BJ (cell line): ENCODE measurements at regions of chr3 and their contacts with region 1.

Region 1: DNA sequence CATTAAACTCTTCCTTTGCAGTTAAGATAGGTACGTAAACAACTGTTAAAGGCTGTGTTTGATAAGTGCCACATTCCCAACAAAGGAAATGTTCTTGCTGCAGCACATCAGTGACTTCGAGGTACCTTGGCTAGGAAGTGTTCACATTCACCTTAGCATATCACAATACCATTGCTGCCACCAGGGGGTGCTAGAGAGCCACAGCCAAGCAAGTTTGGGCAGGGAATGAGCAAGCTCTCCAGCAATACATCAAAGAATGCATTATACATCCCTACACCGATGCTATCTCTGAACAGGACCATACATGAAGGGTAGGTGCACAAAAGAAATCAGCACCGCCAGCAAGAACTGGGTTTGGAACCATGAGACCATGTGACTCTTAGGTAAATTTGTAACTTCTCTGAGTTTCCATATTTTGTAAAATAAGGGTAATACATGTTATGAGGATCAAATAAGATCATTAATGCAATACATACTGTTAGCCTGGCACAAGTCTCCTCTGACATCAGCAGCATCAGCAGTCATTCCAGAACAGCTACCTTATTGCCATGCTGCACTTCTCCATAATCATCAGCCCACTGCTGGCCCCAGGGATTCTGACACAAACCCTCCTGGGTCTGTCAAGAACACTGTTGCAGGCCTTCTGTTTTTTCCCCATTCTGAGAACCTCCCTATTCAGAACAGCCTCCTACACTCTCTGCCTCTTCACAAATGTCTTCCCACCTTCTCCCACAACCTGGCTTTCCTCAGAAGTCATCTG is 37.6 kb downstream of the RYK start:
- DNase-seq: no peak
- H3K4me3 ChIP-seq: no peak overlapping the region
- H3K27me3 ChIP-seq: no peaks in the 10 kb centered on the region
- CTCF ChIP-seq: peak; percentile 97

Region 2: GRCh38 chr3:133943639-133944141 is 269.4 kb before region 1 on chr3:
- CTCF ChIA-PET with region 1: interaction called, 16 read pairs
- POLR2A ChIA-PET with region 1: no interaction called
- DNase-seq: no peak
- H3K4me3 ChIP-seq: no peak overlapping the region
- H3K27me3 ChIP-seq: peaks cover 7% of the 10 kb centered on the region
- CTCF ChIP-seq: no peak

Region 3: GRCh38 chr3:134228035-134228434 is 14.9 kb after region 1 on chr3:
- CTCF ChIA-PET with region 1: interaction called, 62 read pairs
- POLR2A ChIA-PET with region 1: no interaction called
- DNase-seq: no peak
- H3K4me3 ChIP-seq: no peak overlapping the region
- H3K27me3 ChIP-seq: no peaks in the 10 kb centered on the region
- CTCF ChIP-seq: no peak

Region 4: GRCh38 chr3:134242649-134243617 is 29.8 kb after region 1 on chr3:
- CTCF ChIA-PET with region 1: interaction called, 29 read pairs
- POLR2A ChIA-PET with region 1: no interaction called
- DNase-seq: peak; percentile 88
- H3K4me3 ChIP-seq: no peak overlapping the region
- H3K27me3 ChIP-seq: no peaks in the 10 kb centered on the region
- CTCF ChIP-seq: no peak

Region 5: GRCh38 chr3:134299185-134299887 is 86.2 kb after region 1 on chr3:
- CTCF ChIA-PET with region 1: interaction called, 106 read pairs
- POLR2A ChIA-PET with region 1: no interaction called
- DNase-seq: no peak
- H3K4me3 ChIP-seq: no peak overlapping the region
- H3K27me3 ChIP-seq: no peaks in the 10 kb centered on the region
- CTCF ChIP-seq: peak; percentile 53

Region 6: DNA sequence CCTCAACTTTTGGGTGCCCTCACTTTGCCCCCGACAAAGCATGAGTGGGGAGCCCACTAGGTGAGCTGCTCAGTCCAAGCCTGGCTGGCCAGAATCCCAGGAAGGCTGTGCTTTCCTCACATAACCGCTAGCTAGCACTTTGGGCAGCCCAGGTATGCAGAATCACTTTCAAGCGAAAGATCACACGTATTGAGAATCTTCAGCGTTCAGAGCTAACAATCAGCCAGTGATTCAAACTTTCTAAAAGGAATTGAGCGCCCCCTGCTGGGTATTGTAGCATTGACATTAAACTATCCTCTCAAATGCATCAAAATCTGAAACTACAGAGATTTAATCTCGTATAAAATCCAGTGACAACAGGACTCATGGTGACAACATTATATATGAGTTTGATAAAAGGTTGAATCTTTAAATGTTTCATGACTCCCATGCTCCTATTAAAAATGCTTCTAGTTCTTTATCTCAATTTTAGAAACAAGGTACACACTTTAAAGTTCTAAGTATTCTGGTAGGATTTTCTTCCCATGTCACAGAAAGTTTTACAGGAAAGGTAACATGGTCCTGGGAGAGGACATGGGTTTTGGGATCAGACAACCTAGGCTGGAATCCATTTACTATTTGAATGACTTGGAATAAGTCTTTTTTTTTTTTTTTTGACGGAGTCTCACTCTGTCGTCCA is 260.9 kb after region 1 on chr3:
- CTCF ChIA-PET with region 1: interaction called, 27 read pairs
- POLR2A ChIA-PET with region 1: no interaction called
- DNase-seq: no peak
- H3K4me3 ChIP-seq: no peak overlapping the region
- H3K27me3 ChIP-seq: no peaks in the 10 kb centered on the region
- CTCF ChIP-seq: peak; percentile 61